ENCODE measurements at regions of chr1 and their contacts with region 1.

Region 1: DNA sequence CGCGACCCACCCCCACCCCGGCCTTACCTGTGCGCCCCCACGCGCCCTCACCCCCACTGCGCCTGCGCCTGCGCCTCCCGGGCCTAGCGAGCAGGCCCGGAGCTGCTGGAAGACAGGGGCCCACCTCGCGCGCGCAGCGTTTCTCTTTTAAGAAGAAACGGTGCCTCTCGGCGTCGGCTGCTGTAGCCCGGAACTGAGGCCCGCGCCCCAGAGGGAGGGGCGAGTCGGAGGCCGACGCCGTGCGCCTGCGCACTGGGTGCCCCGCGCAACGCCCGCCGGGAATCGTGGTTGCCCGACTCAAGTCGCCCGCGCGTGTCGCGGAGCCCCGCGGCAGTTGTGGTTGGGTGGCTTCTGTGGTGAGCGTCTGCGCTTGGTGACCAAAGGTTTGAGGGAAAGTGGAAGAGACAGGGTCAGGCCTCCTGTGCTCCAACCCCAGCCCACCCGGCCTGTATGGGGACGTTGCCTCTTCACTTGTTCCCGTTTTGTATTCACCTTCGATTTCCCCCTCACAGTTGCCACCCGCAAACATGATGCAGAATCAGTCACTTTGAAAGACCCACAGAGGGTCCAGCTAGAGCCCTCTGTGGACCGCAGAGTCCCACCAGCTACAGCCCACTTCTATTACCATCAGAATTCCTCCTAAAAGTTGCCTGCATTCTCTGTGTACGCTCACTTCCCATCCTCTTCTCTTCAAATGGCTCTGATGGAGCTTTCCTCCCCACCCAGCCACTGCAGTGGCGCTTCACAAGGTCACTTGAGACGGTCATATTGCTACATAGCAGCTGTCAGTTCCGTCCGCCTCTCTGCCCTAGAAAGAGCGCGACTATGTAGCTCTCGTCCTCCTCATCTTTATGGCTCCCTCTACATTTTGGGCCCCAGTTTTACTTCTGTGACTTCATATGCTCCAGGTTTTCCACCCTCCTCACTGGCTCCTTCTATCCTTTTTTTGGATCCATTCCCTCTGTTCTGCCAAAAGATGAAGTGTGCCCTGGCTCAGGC is at the start of gene ZNF692:
- DNase-seq: peak; percentile 98
- ATAC-seq: peak; percentile 86
- H3K4me3 Mint-ChIP-seq: peak within 1 kb of the TSS; percentile 86
- H3K27ac Mint-ChIP-seq: peak within 1 kb of the TSS; percentile 94
- H3K4me1 Mint-ChIP-seq: peaks cover 38% of the 10 kb centered on the region
- H3K27me3 Mint-ChIP-seq: no peaks in the 10 kb centered on the region
- total RNA-seq, gene ZNF692: 70.5 to 74.9 TPM

Region 2: GRCh38 chr1:248251530-248251929 is 607.7 kb before region 1 on chr1:
- CTCF ChIA-PET with region 1: no interaction called
- DNase-seq: no peak
- ATAC-seq: no peak
- H3K4me3 Mint-ChIP-seq: no peak overlapping the region
- H3K27ac Mint-ChIP-seq: no peak overlapping the region
- H3K4me1 Mint-ChIP-seq: no peaks in the 10 kb centered on the region
- H3K27me3 Mint-ChIP-seq: no peaks in the 10 kb centered on the region

Region 3: DNA sequence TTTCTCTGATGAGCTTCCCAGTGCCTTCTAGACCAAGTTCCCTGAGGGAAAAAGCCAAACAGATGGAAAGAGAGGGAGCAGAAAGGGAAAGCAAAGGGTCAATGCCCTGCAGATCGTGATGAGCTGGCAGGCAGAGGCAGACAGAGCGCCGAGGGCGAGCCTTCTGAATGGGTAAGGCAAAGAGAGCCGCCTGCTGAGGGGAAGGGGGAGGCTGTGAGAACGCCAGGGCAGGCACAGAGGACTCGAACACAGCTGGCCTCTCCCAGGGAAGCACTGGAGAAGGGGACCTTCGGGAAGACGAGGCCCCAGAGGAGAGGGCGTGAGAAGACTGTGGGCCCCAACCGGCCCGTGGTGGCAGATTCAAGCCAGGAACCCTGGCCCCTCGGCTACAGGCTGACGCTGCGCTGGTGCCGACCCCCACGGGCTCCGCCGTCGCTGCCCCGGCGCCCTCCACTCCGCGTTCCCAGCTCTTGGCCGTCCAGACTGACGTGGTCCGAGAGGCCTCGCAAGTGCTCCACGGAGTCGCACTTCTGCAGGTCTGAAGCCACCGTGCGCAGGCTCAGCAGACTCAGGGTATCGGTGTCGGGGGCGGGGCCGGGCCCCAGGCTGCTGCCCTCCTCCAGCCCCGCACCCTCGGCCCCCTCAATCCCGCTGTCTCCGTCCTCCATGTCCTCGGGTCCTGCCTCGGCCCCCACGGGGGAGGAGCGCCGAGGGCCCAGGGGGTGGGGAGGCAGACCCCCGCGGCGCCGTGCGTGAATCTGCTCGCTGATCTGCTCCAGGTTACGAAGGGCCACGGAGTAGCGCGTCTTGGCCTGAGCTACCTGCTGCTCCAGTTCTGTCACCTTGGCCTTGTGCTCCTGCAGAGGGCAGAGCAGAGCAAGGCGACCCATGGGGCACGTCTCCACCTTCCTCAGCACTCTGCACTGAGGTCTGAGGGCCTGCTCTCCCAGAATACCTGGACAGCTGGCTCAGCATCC is 47.4 kb before region 1 on chr1:
- CTCF ChIA-PET with region 1: no interaction called
- DNase-seq: no peak
- ATAC-seq: no peak
- H3K4me3 Mint-ChIP-seq: no peak overlapping the region
- H3K27ac Mint-ChIP-seq: no peak overlapping the region
- H3K4me1 Mint-ChIP-seq: peaks cover 10% of the 10 kb centered on the region
- H3K27me3 Mint-ChIP-seq: no peaks in the 10 kb centered on the region

Region 4: DNA sequence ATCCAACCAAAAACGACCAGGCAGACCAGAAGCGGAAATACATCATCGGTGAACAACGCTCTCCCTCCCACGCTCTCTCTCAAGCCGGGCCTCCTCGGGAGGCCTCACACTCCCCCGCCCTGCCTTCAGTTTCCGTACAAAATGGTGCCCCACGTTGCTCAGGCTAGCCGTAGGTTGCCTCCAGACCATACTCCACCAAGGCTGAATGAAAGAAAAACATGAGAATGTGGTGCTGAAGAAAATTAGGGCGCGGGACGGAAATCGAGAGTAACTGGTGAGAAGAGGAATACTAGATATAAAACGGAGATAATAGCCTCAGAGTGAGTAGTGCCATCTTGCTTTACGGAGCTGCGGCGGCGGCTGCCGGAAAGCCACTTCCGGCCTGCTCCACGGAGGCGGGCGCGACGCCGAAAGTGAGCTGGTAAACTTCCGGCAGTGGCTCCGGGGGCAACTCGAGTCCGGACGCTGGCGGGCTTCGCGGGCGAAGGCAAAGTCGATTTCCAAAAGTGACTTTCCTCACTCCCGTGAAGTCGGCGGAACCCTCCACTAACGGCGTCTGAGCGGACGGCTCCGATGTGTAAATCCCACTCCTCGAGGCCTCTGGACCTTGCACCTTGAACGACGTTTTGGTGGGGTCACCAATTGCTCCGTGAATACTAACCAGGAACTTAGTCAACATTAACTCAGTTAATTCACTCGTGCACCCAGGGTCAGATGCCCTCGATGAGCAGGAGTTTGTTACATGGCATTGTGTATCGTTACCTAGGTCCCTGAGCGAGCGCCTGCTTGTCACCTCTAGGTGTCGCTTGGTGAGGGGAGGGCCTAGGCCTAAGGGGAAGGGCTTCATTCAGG is 33.1 kb before region 1 on chr1 and contains the start of gene SH3BP5L:
- CTCF ChIA-PET with region 1: interaction called, 13 read pairs
- DNase-seq: peak; percentile 95
- ATAC-seq: peak; percentile 90
- H3K4me3 Mint-ChIP-seq: peak within 1 kb of the TSS; percentile 86
- H3K27ac Mint-ChIP-seq: peak within 1 kb of the TSS; percentile 96
- H3K4me1 Mint-ChIP-seq: peaks cover 48% of the 10 kb centered on the region
- H3K27me3 Mint-ChIP-seq: no peaks in the 10 kb centered on the region
- total RNA-seq, gene SH3BP5L: 27.4 to 27.9 TPM

Region 5: GRCh38 chr1:248837794-248838356 is 21.3 kb before region 1 on chr1 and contains the start of gene ZNF672:
- CTCF ChIA-PET with region 1: interaction called, 37 read pairs
- DNase-seq: peak; percentile 97
- ATAC-seq: peak; percentile 91
- H3K4me3 Mint-ChIP-seq: no peak within 1 kb of the TSS
- H3K27ac Mint-ChIP-seq: no peak within 1 kb of the TSS
- H3K4me1 Mint-ChIP-seq: peaks cover 25% of the 10 kb centered on the region
- H3K27me3 Mint-ChIP-seq: peaks cover 6% of the 10 kb centered on the region
- total RNA-seq, gene ZNF672: 53.8 to 72.3 TPM

Region 6: GRCh38 chr1:248873409-248873992 is 14.3 kb after region 1 on chr1:
- CTCF ChIA-PET with region 1: interaction called, 15 read pairs
- DNase-seq: peak; percentile 95
- ATAC-seq: peak; percentile 86
- H3K4me3 Mint-ChIP-seq: peak overlapping the region; percentile 91
- H3K27ac Mint-ChIP-seq: peak overlapping the region; percentile 85
- H3K4me1 Mint-ChIP-seq: peaks cover 21% of the 10 kb centered on the region
- H3K27me3 Mint-ChIP-seq: peaks cover 10% of the 10 kb centered on the region

Region 7: DNA sequence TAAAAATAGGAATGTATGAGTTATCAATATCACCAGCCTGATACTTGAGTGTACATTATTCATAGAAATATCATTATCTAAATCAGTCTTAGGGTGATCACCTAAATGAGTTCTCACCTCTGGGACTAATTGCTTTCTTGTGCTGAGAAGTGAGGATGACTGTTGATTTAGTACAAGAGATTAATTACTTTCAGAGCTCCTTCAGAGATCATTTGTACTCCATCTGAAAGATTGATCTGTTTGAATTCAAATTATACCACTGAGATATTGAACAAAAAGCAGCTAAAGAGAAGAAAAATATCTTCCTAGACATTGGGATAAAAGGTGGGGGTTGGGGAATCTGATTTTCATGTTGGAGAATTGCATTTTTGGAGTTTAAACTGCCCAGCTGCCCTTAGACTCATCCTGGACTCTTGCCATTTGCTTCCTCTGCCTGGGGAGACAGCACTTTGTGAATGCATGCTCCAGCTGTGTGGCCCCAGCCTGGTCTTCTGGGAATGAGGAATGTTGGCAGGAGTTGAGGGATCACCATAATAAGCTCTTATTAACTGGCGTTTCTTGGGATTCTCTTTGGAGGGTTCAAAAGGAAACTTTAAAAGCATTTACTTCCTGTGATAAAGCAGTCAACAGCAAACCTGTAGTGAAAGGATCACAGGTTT is 27.2 kb after region 1 on chr1:
- CTCF ChIA-PET with region 1: no interaction called
- DNase-seq: no peak
- ATAC-seq: no peak
- H3K4me3 Mint-ChIP-seq: no peak overlapping the region
- H3K27ac Mint-ChIP-seq: no peak overlapping the region
- H3K4me1 Mint-ChIP-seq: no peaks in the 10 kb centered on the region
- H3K27me3 Mint-ChIP-seq: peaks cover 26% of the 10 kb centered on the region

Region 8: GRCh38 chr1:248906009-248906752 is 47.0 kb after region 1 on chr1 and contains the start of gene PGBD2:
- CTCF ChIA-PET with region 1: interaction called, 10 read pairs
- DNase-seq: peak; percentile 95
- ATAC-seq: peak; percentile 88
- H3K4me3 Mint-ChIP-seq: peak within 1 kb of the TSS; percentile 83
- H3K27ac Mint-ChIP-seq: peak within 1 kb of the TSS; percentile 97
- H3K4me1 Mint-ChIP-seq: peaks cover 45% of the 10 kb centered on the region
- H3K27me3 Mint-ChIP-seq: peaks cover 8% of the 10 kb centered on the region
- total RNA-seq, gene PGBD2: 6.3 to 7.7 TPM